ENCODE measurements at regions of chr19 and their contacts with region 1.

Region 1: GRCh38 chr19:34974646-34975045 is 10.6 kb upstream of the ZNF792 start:
- DNase-seq: no peak
- ATAC-seq: no peak
- H3K4me3 ChIP-seq: no peak overlapping the region
- H3K27ac ChIP-seq: no peak overlapping the region
- H3K4me1 ChIP-seq: peaks cover 51% of the 10 kb centered on the region
- H3K27me3 ChIP-seq: peaks cover 0 to 20% of the 10 kb centered on the region in 2 experiments; a peak in 1 of 5 replicates
- CTCF ChIP-seq: no peak
- EP300 ChIP-seq: no peak
- POLR2A ChIP-seq: no peak
- RAD21 ChIP-seq: no peak

Region 2: DNA sequence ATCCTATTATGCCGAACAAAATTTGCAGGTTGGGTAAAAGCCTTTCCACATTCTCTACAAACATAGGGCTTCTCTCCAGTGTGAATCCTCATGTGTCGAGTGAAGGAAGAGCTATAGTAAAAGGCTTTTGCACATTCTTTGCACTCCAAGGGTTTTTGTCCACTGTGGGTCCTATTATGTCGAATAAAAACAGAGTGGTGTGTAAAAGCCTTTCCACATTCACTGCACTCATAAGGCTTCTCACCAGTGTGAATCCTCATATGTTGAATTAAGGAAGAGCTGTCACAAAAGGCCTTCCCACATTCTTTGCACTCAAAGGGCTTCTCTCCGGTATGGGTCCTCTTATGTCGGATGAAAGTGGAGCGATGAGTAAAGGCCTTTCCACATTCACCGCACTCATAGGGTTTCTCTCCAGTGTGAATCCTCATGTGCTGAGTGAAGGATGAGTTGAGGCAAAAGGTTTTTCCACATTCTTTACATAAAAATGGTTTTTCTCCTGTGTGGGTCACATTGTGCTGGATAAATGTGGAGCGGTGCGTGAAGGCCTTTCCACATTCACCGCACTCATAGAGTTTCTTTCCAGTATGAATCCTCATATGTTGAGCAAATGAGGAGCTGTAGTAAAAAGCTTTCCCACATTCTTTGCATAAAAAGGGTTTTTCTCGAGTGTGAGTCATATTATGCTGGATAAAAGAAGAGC is 215.3 kb before region 1 on chr19:
- CTCF ChIA-PET with region 1: no interaction called
- POLR2A ChIA-PET with region 1: no interaction called
- in situ Hi-C with region 1: no loop called
- intact Hi-C with region 1: no loop called
- DNase-seq: no peak
- ATAC-seq: no peak
- H3K4me3 ChIP-seq: no peak overlapping the region
- H3K27ac ChIP-seq: no peak overlapping the region
- H3K4me1 ChIP-seq: no peaks in the 10 kb centered on the region
- H3K27me3 ChIP-seq: no peaks in the 10 kb centered on the region
- CTCF ChIP-seq: no peak
- EP300 ChIP-seq: no peak
- POLR2A ChIP-seq: no peak
- RAD21 ChIP-seq: no peak

Region 3: DNA sequence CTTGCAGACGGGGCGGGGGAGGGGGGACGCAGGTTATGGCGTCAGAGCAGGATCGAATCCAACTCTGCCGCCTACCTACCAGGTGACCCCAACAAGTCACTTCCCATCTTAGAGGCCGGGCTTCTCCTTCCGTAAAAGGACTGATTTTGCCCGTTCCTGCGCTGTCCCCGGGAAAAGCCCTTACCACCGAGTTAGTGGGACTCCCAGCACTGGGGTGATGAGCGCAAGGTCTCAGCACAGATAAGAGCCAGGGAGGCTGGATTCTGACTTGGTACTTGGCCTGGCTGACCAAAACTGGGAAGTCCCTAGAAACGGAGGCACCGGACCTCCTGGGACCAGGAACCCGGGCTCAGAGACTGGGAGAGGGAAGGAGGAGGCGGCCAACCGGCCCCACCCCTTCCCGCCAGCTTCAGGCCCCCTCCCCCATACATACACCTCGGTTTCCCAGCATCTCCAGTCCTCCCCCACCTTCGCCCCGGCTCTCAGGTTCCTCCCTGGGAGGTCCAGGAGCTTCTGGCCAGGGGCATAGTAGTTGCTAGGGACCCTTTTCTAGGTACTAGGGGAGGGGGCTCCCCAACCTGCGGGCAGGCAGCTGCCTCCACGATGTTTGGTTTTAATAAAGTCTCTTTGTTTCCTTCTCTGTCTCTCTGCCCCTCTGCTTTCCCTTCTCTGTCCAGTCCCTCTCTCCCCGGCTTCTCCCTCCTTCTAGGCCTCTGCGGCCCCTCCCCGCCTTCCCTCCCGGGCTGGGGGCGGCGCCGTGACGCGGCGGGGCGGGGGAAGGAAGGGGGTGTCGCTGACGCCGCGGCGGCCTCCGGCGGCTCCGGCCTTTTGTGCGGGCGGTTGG is 25.1 kb after region 1 on chr19 and contains the start of gene GRAMD1A:
- CTCF ChIA-PET with region 1: no interaction called
- POLR2A ChIA-PET with region 1: interaction called, 5 read pairs
- in situ Hi-C with region 1: no loop called
- intact Hi-C with region 1: loop called (anchors 2 kb)
- DNase-seq: peak; percentile 81
- ATAC-seq: peak; percentile 10; the same call in 2 of the 3 replicates
- H3K4me3 ChIP-seq: peak within 1 kb of the TSS; percentile 81 to 86 (median 81)
- H3K27ac ChIP-seq: peak within 1 kb of the TSS; percentile 83
- H3K4me1 ChIP-seq: peaks cover 81% of the 10 kb centered on the region
- H3K27me3 ChIP-seq: no peaks in the 10 kb centered on the region; a peak in 1 of 5 replicates
- CTCF ChIP-seq: no peak
- EP300 ChIP-seq: 0 out of 4 replicates have a peak, but pooled peaks of 1 of the 2 experiments have one; percentile 16
- POLR2A ChIP-seq: peak in 1 of 2 experiments; percentile 64; a peak in 3 of 4 replicates
- RAD21 ChIP-seq: no peak
- total RNA-seq, gene GRAMD1A: 8.0 and 14.7 TPM in 2 replicates

Region 4: DNA sequence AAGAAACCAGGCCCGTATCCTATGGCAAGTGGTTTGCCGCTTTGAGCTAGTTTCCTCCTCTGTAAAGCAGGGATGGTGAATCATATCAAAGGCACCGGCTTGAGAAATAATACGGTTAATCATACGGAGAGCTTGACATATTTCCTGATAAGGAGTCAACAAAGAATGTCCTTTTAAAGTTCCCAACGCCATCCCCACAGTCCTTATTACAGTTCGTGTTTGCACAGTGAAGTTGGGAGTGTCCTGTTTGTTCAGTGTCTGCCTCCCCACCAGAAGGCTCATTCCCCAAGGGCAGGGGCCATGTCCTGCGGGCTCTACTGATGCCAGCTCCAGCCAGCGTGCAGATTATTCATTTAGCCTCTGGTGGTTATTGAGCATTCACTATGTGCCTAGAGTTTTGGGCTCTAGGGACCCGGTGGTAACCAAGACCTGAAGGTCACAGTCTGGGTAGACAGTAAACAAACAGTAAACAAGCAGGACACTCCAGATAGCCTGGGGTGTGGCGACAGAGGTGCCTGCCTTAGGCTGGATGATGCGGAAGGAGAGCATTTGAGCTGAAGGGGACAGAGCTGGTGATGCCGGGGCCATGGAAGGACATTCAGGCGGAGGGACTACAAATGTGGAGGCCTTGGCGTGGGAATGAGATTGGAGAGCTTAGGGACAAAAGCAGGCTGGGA is 31.8 kb after region 1 on chr19:
- CTCF ChIA-PET with region 1: interaction called, 99 read pairs
- POLR2A ChIA-PET with region 1: interaction called, 10 read pairs
- in situ Hi-C with region 1: loop called (anchors 5 kb)
- intact Hi-C with region 1: no loop called
- DNase-seq: peak; percentile 99
- ATAC-seq: peak; percentile 89
- H3K4me3 ChIP-seq: peak overlapping the region in 1 of 3 experiments; percentile 10; a peak in 1 of 6 replicates
- H3K27ac ChIP-seq: peak overlapping the region; percentile 63
- H3K4me1 ChIP-seq: peaks cover 60% of the 10 kb centered on the region
- H3K27me3 ChIP-seq: no peaks in the 10 kb centered on the region
- CTCF ChIP-seq: peak; percentile 19; the same call in 1 of the 2 replicates
- EP300 ChIP-seq: peak; percentile 82 to 95; a peak in 3 of 4 replicates
- POLR2A ChIP-seq: peak in 1 of 2 experiments; percentile 43; a peak in 2 of 4 replicates
- RAD21 ChIP-seq: peak; percentile 27; the same call in 1 of the 2 replicates

Region 5: GRCh38 chr19:35013031-35013819 is 38.6 kb after region 1 on chr19:
- CTCF ChIA-PET with region 1: interaction called, 99 read pairs
- POLR2A ChIA-PET with region 1: interaction called, 3 read pairs
- in situ Hi-C with region 1: loop called (anchors 5 kb)
- intact Hi-C with region 1: loop called (anchors 1 kb)
- DNase-seq: peak; percentile 48
- ATAC-seq: peak; percentile 73
- H3K4me3 ChIP-seq: no peak overlapping the region
- H3K27ac ChIP-seq: no peak overlapping the region
- H3K4me1 ChIP-seq: 0 out of 2 replicates have a peak, but pooled peaks cover 9% of the 10 kb centered on the region
- H3K27me3 ChIP-seq: no peaks in the 10 kb centered on the region
- CTCF ChIP-seq: peak; percentile 92
- EP300 ChIP-seq: no peak
- POLR2A ChIP-seq: peak in 1 of 2 experiments; percentile 55; a peak in 2 of 4 replicates
- RAD21 ChIP-seq: peak; percentile 98

Region 6: GRCh38 chr19:35044317-35045117 is 69.9 kb after region 1 on chr19:
- CTCF ChIA-PET with region 1: interaction called, 15 read pairs
- POLR2A ChIA-PET with region 1: no interaction called
- in situ Hi-C with region 1: no loop called
- intact Hi-C with region 1: no loop called
- DNase-seq: peak; percentile 28
- ATAC-seq: no peak
- H3K4me3 ChIP-seq: peak overlapping the region in 1 of 3 experiments; percentile 84; a peak in 2 of 6 replicates
- H3K27ac ChIP-seq: peak overlapping the region; percentile 99
- H3K4me1 ChIP-seq: peaks cover 63% of the 10 kb centered on the region
- H3K27me3 ChIP-seq: no peaks in the 10 kb centered on the region
- CTCF ChIP-seq: peak; percentile 86
- EP300 ChIP-seq: no peak
- POLR2A ChIP-seq: no peak; a peak in 1 of 4 replicates
- RAD21 ChIP-seq: no peak; the same call in 1 of the 2 replicates

Region 7: DNA sequence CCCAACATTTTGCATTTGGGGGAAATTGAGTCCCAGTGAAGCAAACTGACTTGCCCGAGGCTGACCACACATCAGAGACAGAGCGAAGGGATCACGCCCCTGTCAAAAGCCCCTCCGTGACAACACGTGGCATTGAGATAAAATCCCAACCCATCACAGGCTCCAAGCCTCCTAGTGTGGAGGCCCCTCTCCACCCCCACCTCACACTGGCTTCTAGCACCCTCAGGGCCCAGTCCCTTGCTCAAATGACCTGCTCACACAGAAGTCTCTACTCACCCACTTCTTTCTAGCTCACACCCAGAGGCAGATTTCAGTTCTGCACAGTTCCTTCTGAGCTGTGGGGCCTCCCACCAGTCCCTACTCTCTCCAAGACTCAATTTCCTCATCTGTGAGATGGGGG is 77.2 kb after region 1 on chr19:
- CTCF ChIA-PET with region 1: no interaction called
- POLR2A ChIA-PET with region 1: no interaction called
- in situ Hi-C with region 1: no loop called
- intact Hi-C with region 1: loop called (anchors 2 kb)
- DNase-seq: no peak
- ATAC-seq: no peak
- H3K4me3 ChIP-seq: no peak overlapping the region
- H3K27ac ChIP-seq: no peak overlapping the region
- H3K4me1 ChIP-seq: peaks cover 13% of the 10 kb centered on the region; the same call in 1 of the 2 replicates
- H3K27me3 ChIP-seq: no peaks in the 10 kb centered on the region
- CTCF ChIP-seq: no peak
- EP300 ChIP-seq: no peak
- POLR2A ChIP-seq: no peak
- RAD21 ChIP-seq: no peak

Measured in HepG2 (cell line).